ENCODE measurements at regions of chr20 and their contacts with region 1.

Region 1: DNA sequence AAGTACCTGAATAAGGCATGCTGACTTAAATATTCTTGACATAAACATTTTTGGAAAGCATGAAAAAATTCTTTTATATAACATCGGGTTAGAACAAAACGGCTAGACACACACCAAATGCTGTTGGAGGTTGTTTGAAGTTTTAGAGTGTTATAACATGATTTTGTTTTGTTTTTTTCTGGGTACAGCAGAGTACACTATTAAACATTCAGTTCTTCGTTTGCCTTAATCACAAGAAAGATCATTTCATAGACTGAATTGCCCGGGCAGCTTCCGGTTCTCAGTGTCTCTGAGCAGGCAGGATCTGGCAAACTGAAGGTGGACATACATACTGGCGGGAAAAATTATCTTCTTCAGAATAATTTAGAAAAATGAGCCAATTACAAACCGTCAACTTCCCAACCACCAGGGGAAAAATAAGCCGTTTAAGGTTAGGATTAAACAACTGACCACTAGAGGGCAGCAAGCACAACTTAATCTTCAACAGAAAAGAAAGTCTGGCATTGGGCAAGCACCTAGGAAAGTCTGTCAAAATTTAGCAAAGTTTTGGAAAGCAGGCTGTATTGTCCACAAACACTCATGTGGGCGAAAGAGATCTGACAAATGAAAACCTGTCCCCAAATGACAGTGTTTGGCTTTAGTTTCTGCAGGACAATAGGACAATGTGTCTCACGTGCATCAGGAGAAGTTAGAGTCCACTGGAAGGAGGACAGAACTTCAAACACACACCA is 15.0 kb downstream of the ZNF217 start:
- DNase-seq: peak in 1 of 3 donors; percentile 93
- ATAC-seq: peak; percentile 69
- H3K4me3 ChIP-seq: no peak overlapping the region
- H3K4me1 ChIP-seq: peaks cover 66% of the 10 kb centered on the region
- CTCF ChIP-seq: no peak

Region 2: GRCh38 chr20:53445932-53446331 is 132.7 kb before region 1 on chr20:
- intact Hi-C with region 1: no loop called
- DNase-seq: no peak
- ATAC-seq: no peak
- H3K4me3 ChIP-seq: no peak overlapping the region
- H3K4me1 ChIP-seq: no peaks in the 10 kb centered on the region
- CTCF ChIP-seq: no peak

Region 3: GRCh38 chr20:53480913-53481312 is 97.7 kb before region 1 on chr20:
- intact Hi-C with region 1: no loop called
- DNase-seq: no peak
- ATAC-seq: no peak
- H3K4me3 ChIP-seq: no peak overlapping the region
- H3K4me1 ChIP-seq: no peaks in the 10 kb centered on the region
- CTCF ChIP-seq: no peak

Region 4: GRCh38 chr20:53869466-53870258 is 291.0 kb after region 1 on chr20:
- intact Hi-C with region 1: loop called (anchors 5 to 10 kb)
- DNase-seq: peak in 2 of 3 donors; percentile 58 to 96
- ATAC-seq: peak; percentile 77
- H3K4me3 ChIP-seq: no peak overlapping the region
- H3K4me1 ChIP-seq: peaks cover 57% of the 10 kb centered on the region
- CTCF ChIP-seq: peak; percentile 70

Region 5: GRCh38 chr20:53915446-53916172 is 337.0 kb after region 1 on chr20:
- intact Hi-C with region 1: loop called (anchors 2 to 5 kb)
- DNase-seq: peak; percentile 96 to 100 (median 99)
- ATAC-seq: peak; percentile 97
- H3K4me3 ChIP-seq: no peak overlapping the region
- H3K4me1 ChIP-seq: peaks cover 24% of the 10 kb centered on the region
- CTCF ChIP-seq: peak; percentile 77

Region 6: GRCh38 chr20:53939572-53940359 is 361.1 kb after region 1 on chr20:
- intact Hi-C with region 1: loop called in 1 of 2 experiments (anchors 10 kb)
- DNase-seq: peak; percentile 91 to 99 (median 94)
- ATAC-seq: peak; percentile 90
- H3K4me3 ChIP-seq: no peak overlapping the region
- H3K4me1 ChIP-seq: peaks cover 22% of the 10 kb centered on the region
- CTCF ChIP-seq: peak; percentile 43

Measured in mucosa of descending colon (tissue), 3 donors.